ENCODE measurements at regions of chr10 and their contacts with region 1.

Region 1: DNA sequence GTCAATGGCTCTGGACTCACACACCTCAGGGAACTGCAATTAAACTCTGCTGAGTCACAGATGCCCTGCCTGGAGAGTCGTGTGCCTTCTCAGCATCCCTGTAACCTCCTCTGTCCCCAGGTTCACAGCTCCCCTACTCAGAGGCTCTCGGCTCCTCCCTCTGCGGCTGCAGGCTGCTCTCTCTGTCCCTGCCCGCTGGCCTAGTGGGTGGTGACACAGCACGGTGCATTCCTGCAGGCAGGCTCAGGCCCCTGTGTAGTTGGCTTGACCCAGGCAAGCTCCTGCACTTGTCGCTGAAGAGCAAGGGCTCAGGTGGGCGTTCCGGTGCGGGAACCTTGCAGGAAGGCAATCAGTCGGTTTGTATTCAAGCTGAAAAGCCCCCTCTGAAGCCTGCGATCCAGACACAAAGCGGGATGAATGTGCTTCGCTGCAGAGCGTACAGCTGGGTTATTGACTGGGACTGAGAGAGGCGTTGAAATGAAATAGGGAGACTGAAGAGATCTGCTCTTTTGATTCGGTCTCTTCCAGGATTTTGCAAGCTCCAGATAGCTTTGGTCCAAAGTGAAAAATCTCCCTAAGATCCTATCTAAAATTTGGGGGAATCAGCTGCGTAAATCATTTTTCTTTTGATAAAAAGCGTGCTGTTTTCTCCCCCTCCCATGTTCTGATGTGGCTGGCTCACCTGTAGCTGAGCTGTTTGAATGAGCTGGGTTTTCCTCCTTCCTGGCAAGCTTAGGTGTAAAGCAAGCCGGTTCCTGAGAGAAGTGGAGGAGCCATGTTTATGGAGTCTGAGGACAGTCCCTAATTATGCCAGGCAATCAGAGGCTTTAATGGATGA is 208.7 kb upstream of the PHYHIPL start:
- DNase-seq: peak; percentile 58
- H3K4me3 ChIP-seq: no peak overlapping the region
- H3K27ac ChIP-seq: peak overlapping the region in 1 of 2 experiments; percentile 62; a peak in 2 of 4 replicates
- H3K4me1 ChIP-seq: peaks cover 0 to 34% of the 10 kb centered on the region in 2 experiments; a peak in 2 of 4 replicates
- H3K27me3 ChIP-seq: no peaks in the 10 kb centered on the region; the same call in 1 of the 2 replicates
- CTCF ChIP-seq: no peak
- EP300 ChIP-seq: no peak
- RAD21 ChIP-seq: peak; percentile 20; the same call in 1 of the 2 replicates

Region 2: DNA sequence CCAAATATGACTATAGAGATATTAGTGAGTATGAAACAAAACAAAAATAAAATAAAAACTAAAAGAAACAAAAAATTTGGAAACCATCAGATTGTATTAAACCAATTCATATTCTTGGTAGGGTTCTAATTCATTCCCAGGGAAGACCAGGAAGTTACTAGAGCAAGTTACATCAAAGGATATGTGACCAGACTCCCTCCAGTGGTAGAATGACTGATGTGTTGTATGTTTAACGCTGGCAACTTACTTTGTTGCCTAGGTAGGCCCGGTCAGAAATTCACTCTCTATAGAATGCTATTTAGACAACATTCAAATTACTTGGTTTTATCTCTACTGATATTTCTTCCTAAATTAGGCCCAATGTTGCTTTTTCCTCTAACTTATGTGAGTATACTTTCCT is 213.9 kb after region 1 on chr10:
- CTCF ChIA-PET with region 1: interaction called, 5 read pairs
- POLR2A ChIA-PET with region 1: interaction called, 12 read pairs
- DNase-seq: peak; percentile 70
- H3K4me3 ChIP-seq: no peak overlapping the region
- H3K27ac ChIP-seq: peak overlapping the region in 1 of 2 experiments; percentile 86; a peak in 2 of 4 replicates
- H3K4me1 ChIP-seq: peaks cover 0 to 8% of the 10 kb centered on the region in 2 experiments; a peak in 1 of 4 replicates
- H3K27me3 ChIP-seq: peaks cover 6% of the 10 kb centered on the region
- CTCF ChIP-seq: peak; percentile 71
- EP300 ChIP-seq: no peak
- RAD21 ChIP-seq: peak; percentile 81

Region 3: GRCh38 chr10:59240582-59241183 is 272.9 kb after region 1 on chr10:
- CTCF ChIA-PET with region 1: no interaction called
- POLR2A ChIA-PET with region 1: no interaction called
- DNase-seq: peak; percentile 23
- H3K4me3 ChIP-seq: no peak overlapping the region
- H3K27ac ChIP-seq: no peak overlapping the region; a peak in 1 of 4 replicates
- H3K4me1 ChIP-seq: no peaks in the 10 kb centered on the region; a peak in 1 of 4 replicates
- H3K27me3 ChIP-seq: no peaks in the 10 kb centered on the region
- CTCF ChIP-seq: peak; percentile 77
- EP300 ChIP-seq: no peak
- RAD21 ChIP-seq: peak; percentile 83

Measured in SK-N-SH (cell line).